Dorsolateral prefrontal cortex (tissue), 120 donors: ENCODE measurements at regions of chr10 and their contacts with region 1.

Region 1: DNA sequence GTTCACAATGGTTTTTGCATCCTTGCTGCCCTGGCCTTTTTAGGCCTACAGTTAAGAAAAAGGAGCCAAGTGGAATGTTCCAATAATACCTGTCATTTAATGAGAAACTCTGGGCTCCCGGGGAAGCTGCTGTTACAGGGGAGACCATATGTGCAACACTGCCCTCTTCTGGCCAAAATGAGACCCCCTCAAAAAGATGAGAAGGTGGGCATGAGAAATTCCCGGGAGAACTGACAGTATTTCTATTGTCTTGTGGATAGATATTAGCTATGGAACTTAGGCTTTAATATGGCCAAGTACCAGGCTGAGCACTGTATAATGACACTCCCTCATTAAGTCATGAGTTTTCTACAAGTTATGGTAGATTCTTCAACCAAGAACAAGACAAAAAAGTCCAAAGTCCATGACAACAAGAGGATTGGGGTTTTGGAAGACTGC is 99.4 kb downstream of the CCDC3 start:
- DNase-seq: peak in 4 of 10 donors; percentile 51 to 75 (median 61)
- H3K4me3 ChIP-seq: no peak overlapping the region
- H3K27ac ChIP-seq: peak overlapping the region in 11 of 59 donors; percentile 2 to 84 (median 52)
- H3K27me3 ChIP-seq: no peaks in the 10 kb centered on the region
- CTCF ChIP-seq: peak; percentile 48 to 84 (median 76)

Region 2: GRCh38 chr10:12717981-12718707 is 184.0 kb before region 1 on chr10:
- intact Hi-C with region 1: loop called in 1 of 2 experiments (anchors 5 kb)
- DNase-seq: no peak
- H3K4me3 ChIP-seq: no peak overlapping the region
- H3K27ac ChIP-seq: no peak overlapping the region
- H3K27me3 ChIP-seq: no peaks in the 10 kb centered on the region
- CTCF ChIP-seq: peak in 38 of 56 donors; percentile 11 to 59 (median 29)

Region 3: DNA sequence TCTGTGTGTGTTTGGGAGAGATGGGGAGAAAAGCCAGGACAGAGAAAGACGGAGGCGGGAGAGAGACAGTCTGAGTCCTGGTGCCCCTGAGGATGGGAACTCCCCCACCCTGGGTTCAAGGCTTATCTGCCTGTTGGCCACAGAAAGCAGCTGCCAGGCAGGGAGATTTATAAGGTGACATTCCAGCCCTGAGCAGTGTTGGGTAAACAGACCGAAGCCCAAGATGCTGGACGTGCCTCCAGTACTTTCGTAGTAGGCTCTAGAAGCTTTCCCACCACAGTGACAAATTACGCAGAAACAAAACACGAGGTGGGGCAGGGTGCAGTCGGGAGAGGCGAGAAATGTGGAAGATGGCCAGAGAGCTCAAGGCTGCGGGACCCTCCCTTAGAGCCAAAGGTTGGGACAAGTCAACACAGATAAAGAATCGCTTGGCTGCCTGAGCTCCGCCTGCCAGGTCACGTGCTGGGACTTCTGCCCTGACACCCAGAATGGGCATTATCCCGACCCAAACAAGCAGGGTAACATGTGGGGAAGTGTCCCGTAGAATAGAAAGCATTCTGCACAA is 58.3 kb after region 1 on chr10:
- intact Hi-C with region 1: no loop called
- DNase-seq: no peak
- H3K4me3 ChIP-seq: no peak overlapping the region
- H3K27ac ChIP-seq: peak overlapping the region in 38 of 59 donors; percentile 4 to 78 (median 57)
- H3K27me3 ChIP-seq: no peaks in the 10 kb centered on the region
- CTCF ChIP-seq: no peak

Region 4: GRCh38 chr10:13074561-13075451 is 172.7 kb after region 1 on chr10:
- intact Hi-C with region 1: loop called in 1 of 2 experiments (anchors 5 kb)
- DNase-seq: peak; percentile 61 to 86 (median 80)
- H3K4me3 ChIP-seq: peak overlapping the region in 32 of 59 donors; percentile 1 to 51 (median 27)
- H3K27ac ChIP-seq: peak overlapping the region in 1 of 59 donors; percentile 47
- H3K27me3 ChIP-seq: no peaks in the 10 kb centered on the region
- CTCF ChIP-seq: peak; percentile 70 to 95 (median 87)